ENCODE measurements at regions of chr1 and their contacts with region 1.

Region 1: GRCh38 chr1:226749467-226749866 is 10.4 kb upstream of the ITPKB start:
- DNase-seq: no peak
- H3K4me3 ChIP-seq: no peak overlapping the region
- H3K27ac ChIP-seq: no peak overlapping the region
- H3K4me1 ChIP-seq: no peaks in the 10 kb centered on the region
- H3K27me3 ChIP-seq: peaks cover 2% of the 10 kb centered on the region
- CTCF ChIP-seq: no peak

Region 2: GRCh38 chr1:226679853-226680516 is 69.5 kb before region 1 on chr1:
- CTCF ChIA-PET with region 1: no interaction called
- dilution Hi-C with region 1: loop called (anchors 5 kb)
- in situ Hi-C with region 1: no loop called
- intact Hi-C with region 1: no loop called
- DNase-seq: no peak
- H3K4me3 ChIP-seq: peak overlapping the region in 1 of 3 experiments; percentile 16
- H3K27ac ChIP-seq: no peak overlapping the region
- H3K4me1 ChIP-seq: peaks cover 23% of the 10 kb centered on the region
- H3K27me3 ChIP-seq: no peaks in the 10 kb centered on the region
- CTCF ChIP-seq: no peak

Region 3: GRCh38 chr1:226846801-226847200 is 97.3 kb after region 1 on chr1:
- CTCF ChIA-PET with region 1: no interaction called
- dilution Hi-C with region 1: loop called (anchors 5 kb)
- in situ Hi-C with region 1: no loop called
- intact Hi-C with region 1: no loop called
- DNase-seq: peak; percentile 50
- H3K4me3 ChIP-seq: no peak overlapping the region
- H3K27ac ChIP-seq: no peak overlapping the region
- H3K4me1 ChIP-seq: peaks cover 8% of the 10 kb centered on the region
- H3K27me3 ChIP-seq: no peaks in the 10 kb centered on the region
- CTCF ChIP-seq: no peak

Region 4: DNA sequence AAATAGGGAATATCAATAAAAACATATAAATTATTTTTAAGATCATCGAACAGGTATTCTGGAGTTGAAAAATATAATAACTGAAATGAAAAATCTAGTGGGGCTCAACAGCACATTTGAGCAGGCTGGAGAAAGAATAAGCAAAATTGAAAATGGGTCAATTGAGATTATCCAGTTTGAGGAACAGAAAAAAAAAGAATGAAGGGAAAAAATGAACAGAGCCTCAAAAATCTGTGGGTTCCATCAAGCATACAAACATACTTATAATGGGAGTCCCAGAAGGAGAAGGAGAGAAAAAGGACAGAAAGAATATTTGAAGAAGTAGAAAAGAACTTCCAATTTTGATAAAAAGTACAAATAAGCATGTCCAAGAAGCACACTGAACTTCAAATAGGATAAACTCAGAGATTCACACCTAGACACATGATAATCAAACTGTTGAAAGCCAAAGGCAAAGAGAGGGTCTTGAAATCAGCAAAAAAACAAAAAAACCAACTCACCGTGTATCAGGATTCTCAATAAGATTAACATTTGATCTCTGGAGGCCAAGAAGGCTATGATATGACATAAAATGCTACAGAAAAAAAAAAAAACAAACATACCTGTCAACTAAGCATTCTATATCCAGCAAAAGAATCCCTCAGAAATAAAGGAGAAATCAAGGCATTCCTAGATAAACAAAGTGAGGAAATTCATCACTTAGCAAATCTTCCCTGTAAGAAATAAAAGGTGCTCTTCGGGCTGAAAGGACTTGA is 185.2 kb after region 1 on chr1:
- CTCF ChIA-PET with region 1: no interaction called
- dilution Hi-C with region 1: no loop called
- in situ Hi-C with region 1: no loop called
- intact Hi-C with region 1: no loop called
- DNase-seq: no peak
- H3K4me3 ChIP-seq: no peak overlapping the region
- H3K27ac ChIP-seq: no peak overlapping the region
- H3K4me1 ChIP-seq: peaks cover 18% of the 10 kb centered on the region
- H3K27me3 ChIP-seq: no peaks in the 10 kb centered on the region
- CTCF ChIP-seq: no peak

Measured in mammary epithelial cell (primary cell).